Activated CD4-positive, alpha-beta T cell treated with anti-CD3 and anti-CD28 coated beads for 36 hours (primary cell): ENCODE measurements at regions of chr11 and their contacts with region 1.

Region 1: DNA sequence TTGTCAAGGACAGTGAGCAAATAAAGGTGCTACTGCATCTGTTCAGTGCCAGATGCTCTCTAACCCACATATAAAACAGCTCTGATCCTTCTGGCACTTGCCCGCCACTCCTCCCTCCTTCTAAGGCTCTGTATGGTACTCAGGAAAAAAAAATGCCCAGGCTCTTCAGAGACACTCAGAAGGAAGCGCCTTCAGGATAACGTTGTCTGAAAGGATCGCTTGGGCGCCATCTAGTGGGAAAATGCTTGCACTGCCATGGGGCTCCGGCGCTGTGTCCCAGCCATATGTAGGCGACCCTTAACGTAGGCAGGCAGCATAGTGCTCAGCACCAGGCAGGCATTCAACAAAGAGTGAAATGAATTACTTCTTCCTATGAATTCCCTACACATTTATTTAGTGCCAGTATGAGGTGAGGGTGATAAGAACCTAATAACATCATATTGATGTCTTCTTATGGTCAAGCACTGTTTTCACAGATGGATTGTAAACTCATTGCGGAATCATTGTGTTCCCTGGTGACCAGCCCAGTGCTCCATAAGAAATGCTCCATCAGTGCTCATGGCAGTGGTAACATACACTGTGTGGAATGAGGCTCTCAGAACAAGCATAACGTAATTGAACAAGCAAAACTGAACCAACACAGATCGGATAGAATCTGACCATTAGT is 39.6 kb downstream of the PAMR1 start:
- DNase-seq: peak; percentile 85
- ATAC-seq: peak; percentile 95
- H3K4me3 Mint-ChIP-seq: no peak overlapping the region
- H3K27ac Mint-ChIP-seq: no peak overlapping the region
- H3K4me1 Mint-ChIP-seq: no peaks in the 10 kb centered on the region
- H3K27me3 Mint-ChIP-seq: peaks cover 37% of the 10 kb centered on the region

Region 2: GRCh38 chr11:34585735-34586487 is 899.9 kb before region 1 on chr11:
- CTCF ChIA-PET with region 1: no interaction called
- POLR2A ChIA-PET with region 1: no interaction called
- intact Hi-C with region 1: loop called in 1 of 2 experiments (anchors 1 kb)
- DNase-seq: no peak
- ATAC-seq: no peak
- H3K4me3 Mint-ChIP-seq: no peak overlapping the region
- H3K27ac Mint-ChIP-seq: no peak overlapping the region
- H3K4me1 Mint-ChIP-seq: peaks cover 4% of the 10 kb centered on the region
- H3K27me3 Mint-ChIP-seq: peaks cover 30% of the 10 kb centered on the region

Region 3: GRCh38 chr11:34926101-34926830 is 559.5 kb before region 1 on chr11:
- CTCF ChIA-PET with region 1: interaction called, 8 read pairs
- POLR2A ChIA-PET with region 1: no interaction called
- intact Hi-C with region 1: loop called (anchors 1 kb)
- DNase-seq: peak; percentile 8
- ATAC-seq: peak; percentile 68
- H3K4me3 Mint-ChIP-seq: no peak overlapping the region
- H3K27ac Mint-ChIP-seq: no peak overlapping the region
- H3K4me1 Mint-ChIP-seq: peaks cover 20% of the 10 kb centered on the region
- H3K27me3 Mint-ChIP-seq: no peaks in the 10 kb centered on the region

Region 4: DNA sequence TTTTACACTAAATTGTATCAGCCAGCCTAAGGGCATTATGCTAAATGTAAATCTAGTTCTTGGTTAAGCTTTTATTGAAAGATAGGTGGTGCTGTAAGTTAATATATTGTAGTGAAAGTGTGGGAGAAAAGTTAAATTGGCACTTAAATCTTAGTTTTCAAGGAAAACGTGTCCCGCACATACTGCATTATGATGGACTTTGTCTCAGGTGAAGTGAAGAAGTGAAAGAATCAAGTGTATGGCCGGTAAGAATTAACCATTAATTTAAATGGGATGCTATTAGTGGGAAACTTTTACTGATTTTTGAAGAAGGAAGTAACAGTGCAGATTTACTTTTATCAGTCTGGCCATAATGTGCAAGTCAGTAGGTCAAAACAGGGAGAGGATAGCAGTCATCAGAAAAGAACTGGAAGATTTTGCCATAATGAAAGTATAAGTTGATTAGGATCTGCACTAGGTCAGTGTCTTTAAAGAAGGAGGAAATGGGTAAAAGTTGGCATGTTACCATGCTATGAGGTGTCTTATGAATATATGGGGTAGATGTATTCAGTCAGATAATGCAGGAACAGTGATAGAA is 487.7 kb before region 1 on chr11:
- CTCF ChIA-PET with region 1: no interaction called
- POLR2A ChIA-PET with region 1: no interaction called
- intact Hi-C with region 1: loop called in 1 of 2 experiments (anchors 10 kb)
- DNase-seq: no peak
- ATAC-seq: peak; percentile 39
- H3K4me3 Mint-ChIP-seq: no peak overlapping the region
- H3K27ac Mint-ChIP-seq: peak overlapping the region; percentile 11
- H3K4me1 Mint-ChIP-seq: peaks cover 30% of the 10 kb centered on the region
- H3K27me3 Mint-ChIP-seq: no peaks in the 10 kb centered on the region

Region 5: GRCh38 chr11:35419184-35419829 is 66.5 kb before region 1 on chr11 and contains the start of gene SLC1A2:
- CTCF ChIA-PET with region 1: interaction called, 4 read pairs
- POLR2A ChIA-PET with region 1: no interaction called
- intact Hi-C with region 1: loop called in 1 of 2 experiments (anchors 5 kb)
- DNase-seq: peak; percentile 35
- ATAC-seq: peak; percentile 49
- H3K4me3 Mint-ChIP-seq: peak within 1 kb of the TSS; percentile 49
- H3K27ac Mint-ChIP-seq: no peak within 1 kb of the TSS
- H3K4me1 Mint-ChIP-seq: peaks cover 11% of the 10 kb centered on the region
- H3K27me3 Mint-ChIP-seq: peaks cover 73% of the 10 kb centered on the region
- total RNA-seq, gene SLC1A2: not detected

Region 6: GRCh38 chr11:35458846-35459245 is 26.9 kb before region 1 on chr11:
- CTCF ChIA-PET with region 1: interaction called, 11 read pairs
- POLR2A ChIA-PET with region 1: no interaction called
- intact Hi-C with region 1: no loop called
- DNase-seq: no peak
- ATAC-seq: no peak
- H3K4me3 Mint-ChIP-seq: no peak overlapping the region
- H3K27ac Mint-ChIP-seq: no peak overlapping the region
- H3K4me1 Mint-ChIP-seq: no peaks in the 10 kb centered on the region
- H3K27me3 Mint-ChIP-seq: peaks cover 13% of the 10 kb centered on the region

Region 7: GRCh38 chr11:35496416-35496815 is 10.6 kb after region 1 on chr11:
- CTCF ChIA-PET with region 1: interaction called, 10 read pairs
- POLR2A ChIA-PET with region 1: no interaction called
- intact Hi-C with region 1: no loop called
- DNase-seq: no peak
- ATAC-seq: no peak
- H3K4me3 Mint-ChIP-seq: no peak overlapping the region
- H3K27ac Mint-ChIP-seq: no peak overlapping the region
- H3K4me1 Mint-ChIP-seq: no peaks in the 10 kb centered on the region
- H3K27me3 Mint-ChIP-seq: peaks cover 11% of the 10 kb centered on the region